Heart left ventricle (tissue), 16 donors: ENCODE measurements at regions of chr5 and their contacts with region 1.

Region 1: DNA sequence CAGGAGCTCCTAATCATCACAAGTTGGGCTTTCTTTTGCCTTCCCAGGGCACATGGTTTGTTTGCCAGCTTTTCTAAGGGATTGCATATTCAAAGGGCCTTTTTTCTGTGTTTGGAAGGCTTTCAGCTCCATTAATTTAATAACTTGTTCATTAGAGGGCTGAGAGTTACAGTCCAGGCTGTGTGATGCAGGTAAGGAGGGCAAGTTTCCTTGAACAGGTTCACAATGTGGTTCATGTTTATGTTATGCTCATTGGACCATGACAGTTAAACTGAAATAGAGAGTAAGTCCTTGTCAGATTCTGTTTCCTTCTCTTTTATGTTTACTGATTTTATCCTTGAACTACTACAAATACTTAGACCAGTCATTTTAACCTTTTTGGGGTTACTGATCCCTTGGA is 174.4 kb downstream of the MARCHF11 start:
- DNase-seq: no peak
- ATAC-seq: no peak
- H3K4me3 ChIP-seq: no peak overlapping the region
- H3K27ac ChIP-seq: no peak overlapping the region
- H3K4me1 ChIP-seq: peaks cover 0 to 11% (median 0%) of the 10 kb centered on the region in 12 donors
- H3K27me3 ChIP-seq: no peaks in the 10 kb centered on the region
- CTCF ChIP-seq: no peak
- POLR2A ChIP-seq: no peak

Region 2: DNA sequence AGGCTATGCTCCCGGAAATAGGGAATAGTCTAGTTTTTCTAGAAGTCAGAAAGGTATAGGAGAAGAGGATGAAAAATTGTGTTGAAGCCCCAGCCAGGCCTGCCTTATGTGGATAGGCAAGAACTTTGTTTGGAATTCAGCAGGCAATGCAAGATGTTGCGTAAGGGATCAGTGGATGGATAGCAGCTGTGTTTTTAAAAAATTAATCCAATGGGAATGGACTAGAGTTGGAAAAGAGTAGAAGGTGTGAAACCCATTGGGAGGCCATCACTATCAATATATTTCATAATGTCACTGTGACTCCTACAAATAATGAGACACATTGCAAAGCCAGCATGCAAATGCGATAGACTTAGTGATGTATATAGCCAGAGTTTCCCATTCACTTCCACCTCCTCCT is 107.6 kb before region 1 on chr5:
- intact Hi-C with region 1: no loop called
- DNase-seq: no peak
- ATAC-seq: peak in 2 of 4 donors; percentile 67 to 69
- H3K4me3 ChIP-seq: no peak overlapping the region
- H3K27ac ChIP-seq: no peak overlapping the region
- H3K4me1 ChIP-seq: peaks cover 0 to 17% (median 4%) of the 10 kb centered on the region in 12 donors
- H3K27me3 ChIP-seq: no peaks in the 10 kb centered on the region
- CTCF ChIP-seq: no peak
- POLR2A ChIP-seq: no peak

Region 3: GRCh38 chr5:15948190-15948589 is 57.0 kb before region 1 on chr5:
- intact Hi-C with region 1: no loop called
- DNase-seq: no peak
- ATAC-seq: peak in 1 of 4 donors; percentile 32
- H3K4me3 ChIP-seq: no peak overlapping the region
- H3K27ac ChIP-seq: no peak overlapping the region
- H3K4me1 ChIP-seq: no peaks in the 10 kb centered on the region
- H3K27me3 ChIP-seq: no peaks in the 10 kb centered on the region
- CTCF ChIP-seq: peak in 4 of 12 donors; percentile 15 to 23 (median 20)
- POLR2A ChIP-seq: no peak

Region 4: DNA sequence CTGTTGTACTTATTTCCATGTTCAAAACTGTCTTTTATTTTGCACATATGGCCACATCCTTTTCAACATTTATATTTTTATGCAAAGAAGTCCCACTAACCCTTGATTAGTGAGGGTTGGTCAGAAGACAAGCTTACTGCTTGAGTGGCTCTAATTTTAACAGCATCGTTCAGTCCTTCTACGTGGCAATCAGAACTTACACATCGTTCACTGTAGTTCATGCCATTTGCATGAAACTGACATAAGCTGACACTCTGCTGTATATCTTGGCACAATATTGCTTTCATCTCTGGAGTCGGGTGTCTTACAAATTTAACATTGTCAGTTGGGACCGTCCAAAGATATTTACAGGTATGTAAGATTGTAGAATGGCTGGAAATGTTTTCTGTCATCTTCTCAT is 123.7 kb after region 1 on chr5:
- intact Hi-C with region 1: loop called in 2 of 10 experiments (anchors 5 to 10 kb)
- DNase-seq: no peak
- ATAC-seq: peak in 3 of 4 donors; percentile 53 to 66 (median 57)
- H3K4me3 ChIP-seq: peak overlapping the region in 11 of 12 donors; percentile 11 to 50 (median 38)
- H3K27ac ChIP-seq: peak overlapping the region in 11 of 12 donors; percentile 3 to 79 (median 43)
- H3K4me1 ChIP-seq: peaks cover 0 to 12% (median 0%) of the 10 kb centered on the region in 12 donors
- H3K27me3 ChIP-seq: peaks cover 0 to 14% (median 0%) of the 10 kb centered on the region in 9 donors
- CTCF ChIP-seq: no peak
- POLR2A ChIP-seq: no peak

Region 5: DNA sequence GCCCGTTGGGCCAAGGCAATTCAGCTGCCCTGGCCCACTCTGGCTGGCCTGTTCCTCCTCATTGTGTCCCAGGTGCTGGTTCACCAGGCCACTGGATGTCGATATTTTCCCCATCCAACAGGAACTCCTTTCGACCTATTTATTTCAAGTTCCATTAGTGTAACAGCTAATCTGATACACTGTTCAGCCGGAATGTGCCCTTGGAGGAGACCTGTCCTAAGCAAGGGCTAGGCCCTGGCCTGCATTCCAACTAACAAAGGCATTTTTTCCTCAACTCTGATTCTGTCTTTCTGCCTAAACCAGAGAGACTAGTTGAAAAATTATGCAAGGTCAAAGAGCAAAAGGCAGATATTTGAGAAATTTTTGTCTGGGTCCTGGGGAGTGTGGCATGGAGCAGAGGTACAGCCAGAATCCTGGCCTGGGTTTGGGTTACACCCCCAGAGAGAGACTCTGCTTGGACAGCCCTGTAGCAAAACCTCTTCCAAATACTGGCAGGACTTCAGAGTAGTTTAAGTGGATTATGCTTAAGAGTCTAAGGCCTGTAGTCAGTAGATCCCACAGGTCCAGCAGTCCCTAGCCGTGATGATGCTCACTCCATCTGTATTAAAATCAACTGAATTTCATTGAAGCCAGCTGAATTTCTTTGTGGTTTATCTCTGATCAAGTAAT is 138.3 kb after region 1 on chr5:
- intact Hi-C with region 1: loop called in 1 of 10 experiments (anchors 5 kb)
- DNase-seq: no peak
- ATAC-seq: peak; percentile 46 to 76 (median 64)
- H3K4me3 ChIP-seq: no peak overlapping the region
- H3K27ac ChIP-seq: peak overlapping the region; percentile 46 to 85 (median 70)
- H3K4me1 ChIP-seq: peaks cover 0 to 53% (median 7%) of the 10 kb centered on the region in 12 donors
- H3K27me3 ChIP-seq: no peaks in the 10 kb centered on the region
- CTCF ChIP-seq: no peak
- POLR2A ChIP-seq: no peak

Region 6: DNA sequence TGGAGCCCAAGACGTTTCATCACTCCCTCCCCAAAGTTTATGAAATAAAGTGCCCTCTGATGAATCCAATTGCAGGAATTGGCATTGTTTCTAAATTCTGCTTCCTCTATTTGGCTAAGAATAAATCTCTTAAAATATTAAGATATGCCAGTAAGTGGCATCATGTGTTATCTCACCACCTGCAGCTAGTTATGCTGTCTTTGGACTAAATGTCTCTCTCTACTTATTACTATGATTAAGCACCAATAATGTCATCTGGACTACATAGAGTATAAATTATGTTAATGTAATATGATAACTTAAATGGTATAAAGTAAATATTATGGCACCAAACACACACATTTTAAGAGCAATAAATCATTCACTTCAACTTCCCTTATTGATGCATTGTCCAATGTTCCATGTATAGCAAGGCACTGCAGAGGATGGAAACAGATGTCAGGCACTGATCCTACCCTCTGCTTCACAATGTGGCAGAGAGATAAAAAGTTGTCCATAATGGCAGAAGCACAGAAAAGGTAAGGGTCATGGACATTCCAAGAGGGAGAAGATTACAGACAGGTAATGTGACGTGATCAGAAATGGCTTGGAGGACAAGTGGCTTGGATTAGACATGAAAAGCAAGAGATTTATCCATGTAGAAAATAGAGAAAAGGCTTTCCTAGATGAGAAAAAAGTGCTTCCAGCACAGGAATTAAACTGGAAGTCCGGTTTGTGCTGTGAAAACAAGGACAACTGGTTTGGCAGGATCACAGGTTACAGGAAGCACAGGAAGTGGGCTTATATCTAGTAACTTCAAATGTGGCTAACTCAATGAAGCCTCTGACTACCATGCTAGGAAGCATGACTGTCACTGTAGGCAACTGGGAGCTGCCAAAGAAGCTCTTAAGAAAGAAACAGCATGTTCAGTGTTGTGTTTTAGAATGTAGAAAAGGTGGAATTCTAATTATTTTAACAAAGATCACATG is 147.7 kb after region 1 on chr5:
- intact Hi-C with region 1: loop called in 3 of 10 experiments (anchors 5 to 10 kb)
- DNase-seq: no peak
- ATAC-seq: no peak
- H3K4me3 ChIP-seq: peak overlapping the region in 6 of 12 donors; percentile 0 to 35 (median 14)
- H3K27ac ChIP-seq: peak overlapping the region in 8 of 12 donors; percentile 25 to 69 (median 39)
- H3K4me1 ChIP-seq: peaks cover 0 to 24% (median 0%) of the 10 kb centered on the region in 12 donors
- H3K27me3 ChIP-seq: no peaks in the 10 kb centered on the region
- CTCF ChIP-seq: no peak
- POLR2A ChIP-seq: no peak

Region 7: DNA sequence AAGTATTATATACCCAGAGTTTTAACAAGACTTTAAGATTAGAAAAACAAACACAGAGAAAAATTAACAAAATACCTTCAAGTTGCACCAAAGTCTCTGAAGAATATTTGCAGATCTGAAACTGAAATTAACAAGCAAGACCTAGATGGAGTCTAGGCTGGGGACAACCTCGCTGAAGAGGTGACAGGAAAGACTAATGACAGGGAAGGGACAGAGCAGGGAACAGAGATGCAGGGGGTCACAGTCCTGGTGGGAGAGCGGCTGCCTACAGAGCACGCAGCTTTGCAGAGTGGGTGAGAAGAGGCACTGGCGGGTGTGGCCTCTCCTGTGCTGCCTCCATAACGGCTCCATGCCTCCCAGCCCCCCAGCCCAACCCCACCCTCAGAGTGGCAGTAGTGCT is 598.1 kb after region 1 on chr5:
- intact Hi-C with region 1: no loop called
- DNase-seq: no peak
- ATAC-seq: no peak
- H3K4me3 ChIP-seq: no peak overlapping the region
- H3K27ac ChIP-seq: no peak overlapping the region
- H3K4me1 ChIP-seq: peaks cover 0 to 21% (median 9%) of the 10 kb centered on the region in 12 donors
- H3K27me3 ChIP-seq: no peaks in the 10 kb centered on the region
- CTCF ChIP-seq: no peak
- POLR2A ChIP-seq: no peak

Region 8: GRCh38 chr5:17808566-17808965 is 1803.3 kb after region 1 on chr5:
- intact Hi-C with region 1: no loop called
- DNase-seq: no peak
- ATAC-seq: no peak
- H3K4me3 ChIP-seq: no peak overlapping the region
- H3K27ac ChIP-seq: no peak overlapping the region
- H3K4me1 ChIP-seq: no peaks in the 10 kb centered on the region
- H3K27me3 ChIP-seq: no peaks in the 10 kb centered on the region
- CTCF ChIP-seq: no peak
- POLR2A ChIP-seq: no peak